Left cardiac atrium (tissue), 4 donors: ENCODE measurements at regions of chr12 and their contacts with region 1.

Region 1: GRCh38 chr12:54214553-54215406 is 26.0 kb upstream of the SMUG1 start:
- DNase-seq: peak; percentile 92
- ATAC-seq: peak; percentile 82 to 90

Region 2: DNA sequence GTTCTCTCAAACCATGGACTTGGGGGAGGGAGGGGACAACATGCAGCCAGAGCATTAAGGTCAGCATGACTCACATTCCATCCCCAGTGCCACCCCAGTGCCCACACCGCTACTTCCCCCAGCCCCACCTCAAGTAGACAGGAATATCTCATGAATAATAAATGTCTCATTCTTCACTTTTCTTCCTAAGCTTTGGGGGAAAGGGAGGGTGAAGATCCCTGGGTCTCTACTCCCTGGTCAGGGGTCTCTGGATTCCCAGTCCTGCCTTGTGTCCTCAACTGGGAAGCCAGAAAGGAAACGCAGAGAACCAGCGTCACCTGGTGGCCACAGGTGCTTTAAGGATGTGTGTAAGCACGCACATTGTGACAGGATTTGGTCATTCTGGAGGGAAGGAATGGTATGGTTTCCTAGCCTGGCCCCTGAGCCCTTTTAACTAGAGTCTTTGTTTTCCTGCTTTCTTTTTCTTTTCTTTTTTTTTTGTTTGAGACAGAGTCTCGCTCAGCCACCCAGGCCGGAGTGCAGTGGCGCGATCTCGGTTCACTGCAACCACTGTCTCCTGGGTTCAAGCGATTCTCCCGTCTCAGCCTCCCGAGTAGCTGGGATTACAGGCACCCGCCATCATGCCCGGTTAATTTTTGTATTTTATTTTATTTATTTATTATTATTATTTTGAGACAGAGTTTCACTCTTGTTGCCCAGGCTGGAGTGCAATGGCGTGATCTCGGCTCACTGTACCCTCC is 146.1 kb after region 1 on chr12:
- intact Hi-C with region 1: loop called in 1 of 2 experiments (anchors 5 kb)
- DNase-seq: peak; percentile 73
- ATAC-seq: peak in 1 of 2 donors; percentile 10